ENCODE measurements at regions of chr6 and their contacts with region 1.

Region 1: GRCh38 chr6:37499433-37500293 is at the start of gene CCDC167:
- DNase-seq: peak; percentile 89 to 95 (median 92)
- H3K4me3 ChIP-seq: peak within 1 kb of the TSS; percentile 65 to 96 (median 77)
- H3K4me3 Mint-ChIP-seq: peak within 1 kb of the TSS; percentile 99 to 100
- H3K27ac ChIP-seq: peak within 1 kb of the TSS in 1 of 2 donors; percentile 80
- H3K27ac Mint-ChIP-seq: peak within 1 kb of the TSS; percentile 62 to 97 (median 94)
- H3K4me1 ChIP-seq: peaks cover 10 to 36% of the 10 kb centered on the region in 2 donors
- H3K4me1 Mint-ChIP-seq: peaks cover 40% of the 10 kb centered on the region
- H3K27me3 ChIP-seq: no peaks in the 10 kb centered on the region
- H3K27me3 Mint-ChIP-seq: peaks cover 4 to 9% (median 5%) of the 10 kb centered on the region in 3 donors
- CTCF ChIP-seq: no peak
- polyA plus RNA-seq, gene CCDC167: 12.5 to 22.9 (median 20.7) TPM

Region 2: DNA sequence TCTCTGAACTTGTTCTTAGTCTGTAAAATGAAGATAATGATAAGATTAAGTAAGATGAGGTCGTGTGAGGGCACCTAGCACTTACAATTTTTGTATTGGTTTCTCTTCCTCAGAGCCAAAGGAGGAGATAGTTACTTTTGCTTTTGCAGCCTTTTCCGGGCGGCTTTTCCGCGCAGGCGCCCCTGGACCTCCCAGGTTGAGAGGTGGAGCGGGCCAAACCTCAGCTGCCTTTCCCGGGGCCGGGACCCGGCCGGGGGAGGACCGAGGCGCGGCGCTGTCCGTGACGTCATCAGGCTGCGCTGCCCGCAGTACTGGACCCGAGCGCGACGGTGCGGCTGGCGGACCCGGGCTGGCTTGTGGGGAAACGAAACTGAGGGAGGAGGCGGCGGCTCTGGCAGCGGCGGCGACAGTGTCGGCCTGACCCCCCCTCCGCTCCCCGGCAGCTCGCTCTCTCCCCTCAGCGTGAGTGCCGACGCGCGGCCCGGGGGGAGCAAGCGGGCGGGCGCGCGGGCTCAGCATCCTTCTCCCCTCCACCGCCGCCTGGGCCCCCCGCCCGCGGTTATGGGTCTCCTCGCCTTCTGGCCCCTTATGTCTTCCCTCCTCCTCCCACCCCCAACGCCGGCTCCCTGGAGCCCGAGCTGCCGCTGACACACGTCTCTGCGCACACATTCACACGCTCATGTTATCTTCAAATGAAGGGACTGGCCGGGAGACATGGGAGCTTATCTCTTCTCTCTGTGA is 66.6 kb before region 1 on chr6 and contains the start of gene CMTR1:
- intact Hi-C with region 1: loop called in 1 of 2 experiments (anchors 5 kb)
- DNase-seq: peak; percentile 95 to 97 (median 97)
- H3K4me3 ChIP-seq: peak within 1 kb of the TSS; percentile 72 to 92 (median 83)
- H3K4me3 Mint-ChIP-seq: peak within 1 kb of the TSS; percentile 90 to 93
- H3K27ac ChIP-seq: peak within 1 kb of the TSS; percentile 90 to 97
- H3K27ac Mint-ChIP-seq: peak within 1 kb of the TSS; percentile 94 to 97 (median 95)
- H3K4me1 ChIP-seq: peaks cover 14 to 18% of the 10 kb centered on the region in 2 donors
- H3K4me1 Mint-ChIP-seq: peaks cover 22% of the 10 kb centered on the region
- H3K27me3 ChIP-seq: no peaks in the 10 kb centered on the region
- H3K27me3 Mint-ChIP-seq: peaks cover 0 to 9% (median 2%) of the 10 kb centered on the region in 3 donors
- CTCF ChIP-seq: no peak
- polyA plus RNA-seq, gene CMTR1: 12.0 to 32.3 (median 15.3) TPM

Region 3: DNA sequence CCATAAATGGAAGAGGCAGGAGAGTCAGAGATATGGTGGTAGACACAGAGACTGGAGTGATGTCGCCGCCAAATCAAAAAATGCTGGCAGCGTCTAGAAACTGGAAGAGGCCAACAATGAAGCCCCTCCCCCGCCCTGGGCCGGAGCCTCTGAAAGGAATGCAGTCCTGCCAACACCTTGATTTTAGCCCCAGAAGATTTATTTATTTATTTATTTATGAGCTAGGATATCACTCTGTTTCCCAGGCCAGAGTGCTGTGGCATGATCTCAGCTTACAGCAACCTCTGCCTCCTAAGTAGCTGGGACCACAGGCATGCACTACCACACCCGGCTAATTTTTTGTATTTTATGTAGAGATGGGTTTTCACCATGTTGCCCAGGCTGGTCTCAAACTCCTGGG is 82.6 kb after region 1 on chr6:
- intact Hi-C with region 1: no loop called
- DNase-seq: no peak
- H3K4me3 ChIP-seq: no peak overlapping the region
- H3K4me3 Mint-ChIP-seq: no peak overlapping the region
- H3K27ac ChIP-seq: no peak overlapping the region
- H3K27ac Mint-ChIP-seq: no peak overlapping the region
- H3K4me1 ChIP-seq: peaks cover 0 to 9% of the 10 kb centered on the region in 2 donors
- H3K4me1 Mint-ChIP-seq: peaks cover 14% of the 10 kb centered on the region
- H3K27me3 ChIP-seq: peaks cover 0 to 3% of the 10 kb centered on the region in 2 donors
- H3K27me3 Mint-ChIP-seq: peaks cover 4 to 23% (median 17%) of the 10 kb centered on the region in 3 donors
- CTCF ChIP-seq: no peak

Measured in CD14-positive monocyte (primary cell).